ENCODE measurements at regions of chr1 and their contacts with region 1.

Region 1: GRCh38 chr1:36576118-36576517 is 93.4 kb upstream of the CSF3R start:
- DNase-seq: peak; percentile 64
- H3K4me3 ChIP-seq: no peak overlapping the region
- H3K27ac ChIP-seq: no peak overlapping the region
- H3K4me1 ChIP-seq: no peaks in the 10 kb centered on the region
- CTCF ChIP-seq: peak; percentile 90

Region 2: DNA sequence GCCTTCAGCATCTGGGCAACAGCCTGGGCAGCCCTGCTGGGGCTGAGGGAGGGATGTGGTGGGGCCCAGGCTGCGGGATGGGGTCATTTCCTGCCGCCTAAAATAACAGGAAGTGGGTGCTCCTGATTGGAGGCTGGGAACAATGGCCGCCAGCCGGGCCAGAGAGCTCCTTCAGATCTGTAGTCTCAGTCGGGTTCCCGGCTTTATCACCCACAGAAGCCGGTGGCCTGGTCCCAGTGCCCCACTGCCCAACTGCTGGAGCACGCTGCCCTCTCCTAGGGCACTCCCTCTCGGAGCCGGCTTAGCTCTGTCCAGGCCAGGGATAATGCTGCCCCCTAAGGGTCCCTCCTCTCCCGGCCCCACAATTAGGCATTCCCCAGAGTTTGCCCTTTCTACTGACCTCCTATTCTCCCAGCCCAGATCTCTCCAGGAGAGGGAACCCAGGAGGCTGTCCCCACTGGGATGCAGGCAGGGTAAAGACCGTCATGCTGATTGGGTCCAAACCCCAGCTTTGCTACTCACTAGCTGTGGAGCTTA is 415.1 kb before region 1 on chr1:
- CTCF ChIA-PET with region 1: no interaction called
- POLR2A ChIA-PET with region 1: no interaction called
- intact Hi-C with region 1: no loop called
- DNase-seq: peak; percentile 79
- H3K4me3 ChIP-seq: peak overlapping the region; percentile 65
- H3K27ac ChIP-seq: peak overlapping the region; percentile 87
- H3K4me1 ChIP-seq: peaks cover 64% of the 10 kb centered on the region
- CTCF ChIP-seq: peak; percentile 70

Region 3: DNA sequence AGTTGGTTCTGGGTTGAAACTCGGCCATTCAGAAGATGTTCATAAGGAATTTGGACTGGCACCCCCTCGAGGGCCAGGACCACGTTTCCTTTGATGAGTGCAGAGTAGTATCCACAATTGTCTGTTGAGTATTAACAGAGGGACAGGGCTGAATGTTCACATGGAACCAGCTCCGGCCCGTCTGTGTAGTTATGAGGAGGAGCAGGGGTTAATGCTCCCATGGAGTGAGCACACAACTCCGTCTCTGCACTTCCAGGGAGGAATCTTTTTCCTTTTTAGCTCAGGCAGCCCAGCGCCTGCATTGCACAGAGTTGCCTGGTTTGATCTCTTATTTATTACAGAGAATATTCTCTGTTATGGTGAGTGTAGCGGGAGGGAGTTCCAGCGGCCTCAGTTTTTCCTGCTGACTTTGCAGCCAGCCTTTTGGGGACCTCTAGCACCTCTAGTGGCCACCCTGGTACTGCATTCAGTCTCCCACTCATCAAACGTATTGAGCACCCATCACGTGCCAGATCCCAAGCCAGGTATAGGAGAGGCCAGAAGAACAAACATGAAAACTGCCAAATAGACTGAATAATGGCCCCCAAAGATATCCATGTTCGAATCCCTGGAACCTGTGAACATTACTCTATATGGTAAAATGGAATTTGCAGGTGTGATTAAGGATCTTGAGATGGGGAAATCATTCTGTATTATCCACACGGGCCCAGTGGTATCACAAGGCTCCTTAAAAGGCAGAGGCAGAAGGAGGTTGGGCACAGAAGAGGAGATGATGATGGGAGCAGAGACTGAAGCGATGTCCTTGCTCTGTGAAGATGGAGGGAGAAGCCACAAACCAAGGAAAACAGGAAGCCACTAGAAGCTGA is 74.3 kb after region 1 on chr1:
- CTCF ChIA-PET with region 1: no interaction called
- POLR2A ChIA-PET with region 1: no interaction called
- intact Hi-C with region 1: loop called (anchors 5 kb)
- DNase-seq: peak; percentile 57
- H3K4me3 ChIP-seq: no peak overlapping the region
- H3K27ac ChIP-seq: no peak overlapping the region
- H3K4me1 ChIP-seq: no peaks in the 10 kb centered on the region
- CTCF ChIP-seq: peak; percentile 95

Region 4: DNA sequence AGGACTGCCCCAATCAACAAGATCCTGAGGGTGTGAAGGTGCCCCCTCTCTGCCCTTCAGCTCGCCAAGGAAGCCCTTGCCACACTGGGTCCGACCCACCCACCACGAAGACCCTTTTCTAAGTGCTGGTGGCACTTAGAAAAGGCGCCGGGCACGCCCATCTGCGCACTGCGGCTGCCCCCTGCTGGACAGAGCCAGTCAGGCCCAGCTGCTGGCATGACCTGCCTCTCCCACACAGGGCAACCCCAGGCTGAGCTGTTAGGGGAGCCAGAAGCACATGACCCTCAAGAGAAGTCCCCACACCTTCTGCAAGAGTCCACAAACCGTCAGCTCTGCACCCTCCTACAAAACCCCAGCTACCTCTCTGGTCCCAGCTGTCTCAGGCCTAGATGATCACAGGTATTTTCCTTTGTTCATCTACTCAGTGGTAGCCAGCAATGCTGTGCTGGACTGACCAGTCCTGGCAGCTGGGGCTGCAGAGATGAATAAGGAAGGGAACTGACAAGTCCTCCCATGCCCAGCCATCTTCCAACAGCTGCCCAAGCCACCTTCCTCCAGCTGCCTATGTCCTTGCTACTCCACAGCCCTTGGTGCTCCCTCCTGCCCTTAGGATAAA is 858.3 kb after region 1 on chr1:
- CTCF ChIA-PET with region 1: no interaction called
- POLR2A ChIA-PET with region 1: no interaction called
- intact Hi-C with region 1: loop called (anchors 1 kb)
- DNase-seq: peak; percentile 68
- H3K4me3 ChIP-seq: no peak overlapping the region
- H3K27ac ChIP-seq: no peak overlapping the region
- H3K4me1 ChIP-seq: no peaks in the 10 kb centered on the region
- CTCF ChIP-seq: peak; percentile 93